Body of pancreas (tissue), 4 donors: ENCODE measurements at regions of chr4 and their contacts with region 1.

Region 1: DNA sequence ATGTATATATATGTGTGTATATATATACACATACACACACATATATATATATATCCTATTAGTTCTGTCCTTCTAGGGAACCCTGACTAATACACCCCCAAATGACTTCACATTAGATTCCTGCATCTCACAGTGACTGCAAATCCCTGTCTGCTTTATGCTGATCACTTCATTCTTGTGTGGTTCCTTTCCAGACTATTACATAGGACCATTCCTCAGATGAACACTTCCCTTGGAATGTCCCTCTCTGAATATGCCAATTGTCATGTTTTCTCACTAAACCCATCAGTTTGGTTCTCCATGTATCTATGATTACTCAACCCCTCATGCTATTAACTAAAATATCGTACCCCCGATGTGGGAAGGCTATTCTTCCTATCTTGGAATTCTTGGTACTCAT is 605.2 kb upstream of the NR3C2 start:
- DNase-seq: no peak
- ATAC-seq: no peak
- H3K4me3 ChIP-seq: no peak overlapping the region
- H3K27ac ChIP-seq: no peak overlapping the region
- H3K4me1 ChIP-seq: no peaks in the 10 kb centered on the region
- H3K27me3 ChIP-seq: no peaks in the 10 kb centered on the region
- CTCF ChIP-seq: no peak
- POLR2A ChIP-seq: no peak

Region 2: GRCh38 chr4:148182230-148182911 is 865.0 kb before region 1 on chr4:
- intact Hi-C with region 1: loop called (anchors 10 kb)
- DNase-seq: no peak
- ATAC-seq: no peak
- H3K4me3 ChIP-seq: no peak overlapping the region
- H3K27ac ChIP-seq: peak overlapping the region in 2 of 4 donors; percentile 10 to 42
- H3K4me1 ChIP-seq: peaks cover 11% of the 10 kb centered on the region
- H3K27me3 ChIP-seq: no peaks in the 10 kb centered on the region
- CTCF ChIP-seq: no peak
- POLR2A ChIP-seq: no peak

Region 3: DNA sequence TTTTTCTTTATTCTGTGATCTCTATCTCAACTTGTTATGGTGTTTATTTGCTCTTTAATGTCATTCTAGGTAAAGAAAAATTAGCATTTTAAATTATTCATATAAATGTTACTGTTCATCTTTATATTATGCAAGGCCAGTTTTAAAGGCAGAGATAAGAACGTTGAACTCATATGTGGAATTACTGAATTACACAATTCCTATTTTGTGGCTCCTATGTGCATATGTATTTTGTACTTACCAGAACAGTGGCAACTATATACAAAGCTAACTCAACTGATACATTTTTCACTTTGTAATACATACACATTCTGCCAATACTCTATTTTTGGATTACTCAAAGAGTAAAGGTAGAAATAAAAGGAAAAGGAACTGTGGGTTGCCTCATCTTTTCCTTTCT is 71.9 kb before region 1 on chr4:
- intact Hi-C with region 1: no loop called
- DNase-seq: no peak
- ATAC-seq: no peak
- H3K4me3 ChIP-seq: no peak overlapping the region
- H3K27ac ChIP-seq: no peak overlapping the region
- H3K4me1 ChIP-seq: no peaks in the 10 kb centered on the region
- H3K27me3 ChIP-seq: no peaks in the 10 kb centered on the region
- CTCF ChIP-seq: no peak
- POLR2A ChIP-seq: no peak